Activated CD4-positive, alpha-beta memory T cell treated with anti-CD3 and anti-CD28 coated beads for 36 hours (primary cell): ENCODE measurements at regions of chr1 and their contacts with region 1.

Region 1: GRCh38 chr1:24541711-24542346 is 14.1 kb upstream of the NCMAP start:
- DNase-seq: peak; percentile 58
- H3K4me3 Mint-ChIP-seq: no peak overlapping the region
- H3K27ac Mint-ChIP-seq: peak overlapping the region; percentile 93
- H3K4me1 Mint-ChIP-seq: peaks cover 65% of the 10 kb centered on the region
- H3K27me3 Mint-ChIP-seq: no peaks in the 10 kb centered on the region

Region 2: GRCh38 chr1:24186993-24187805 is 354.6 kb before region 1 on chr1 and contains the start of gene IFNLR1:
- CTCF ChIA-PET with region 1: no interaction called
- POLR2A ChIA-PET with region 1: interaction called, 3 read pairs
- intact Hi-C with region 1: loop called (anchors 2 kb)
- DNase-seq: peak; percentile 91
- H3K4me3 Mint-ChIP-seq: peak within 1 kb of the TSS; percentile 80
- H3K27ac Mint-ChIP-seq: peak within 1 kb of the TSS; percentile 54
- H3K4me1 Mint-ChIP-seq: peaks cover 48% of the 10 kb centered on the region
- H3K27me3 Mint-ChIP-seq: peaks cover 2% of the 10 kb centered on the region
- total RNA-seq, gene IFNLR1: 6.2 to 10.0 TPM

Region 3: DNA sequence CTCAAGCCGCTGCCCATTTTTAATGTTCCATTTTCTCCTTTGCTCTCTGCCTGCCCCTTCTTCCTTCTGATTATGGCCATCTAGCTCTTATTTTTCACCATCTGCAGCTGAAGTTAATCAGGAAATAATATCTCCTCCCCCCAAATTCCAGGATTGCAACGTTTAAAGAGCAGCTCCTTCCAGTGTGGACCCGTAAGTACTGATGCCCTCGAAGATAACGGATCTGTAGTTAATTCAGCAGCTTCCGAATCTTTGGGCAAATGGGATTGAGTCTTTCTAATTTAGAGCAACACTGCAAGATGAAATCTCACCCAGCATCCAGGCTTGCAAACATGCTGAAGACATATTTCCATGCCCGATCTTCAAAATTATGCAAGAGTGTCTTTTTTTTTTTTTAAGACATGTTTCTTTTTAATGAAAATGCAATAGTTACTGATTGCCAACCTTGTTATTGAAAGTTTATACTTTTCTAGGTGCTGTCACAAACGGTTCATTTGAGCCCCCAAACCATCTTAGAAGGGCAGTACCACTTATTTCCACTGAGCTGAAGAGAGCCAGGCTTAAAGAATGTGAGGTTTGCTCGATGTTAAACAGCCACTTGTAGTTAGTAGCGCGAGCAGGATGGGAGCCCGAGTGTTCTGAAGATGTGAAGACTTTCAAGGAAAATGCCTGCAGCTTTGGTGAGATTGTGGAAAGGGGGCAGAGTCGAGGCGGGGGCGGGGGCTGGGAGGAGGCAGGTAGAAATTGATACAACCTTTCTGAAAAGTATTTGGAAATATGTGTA is 50.1 kb before region 1 on chr1:
- CTCF ChIA-PET with region 1: interaction called, 7 read pairs
- POLR2A ChIA-PET with region 1: interaction called, 3 read pairs
- intact Hi-C with region 1: loop called (anchors 1 kb)
- DNase-seq: no peak
- H3K4me3 Mint-ChIP-seq: no peak overlapping the region
- H3K27ac Mint-ChIP-seq: no peak overlapping the region
- H3K4me1 Mint-ChIP-seq: peaks cover 30% of the 10 kb centered on the region
- H3K27me3 Mint-ChIP-seq: no peaks in the 10 kb centered on the region

Region 4: DNA sequence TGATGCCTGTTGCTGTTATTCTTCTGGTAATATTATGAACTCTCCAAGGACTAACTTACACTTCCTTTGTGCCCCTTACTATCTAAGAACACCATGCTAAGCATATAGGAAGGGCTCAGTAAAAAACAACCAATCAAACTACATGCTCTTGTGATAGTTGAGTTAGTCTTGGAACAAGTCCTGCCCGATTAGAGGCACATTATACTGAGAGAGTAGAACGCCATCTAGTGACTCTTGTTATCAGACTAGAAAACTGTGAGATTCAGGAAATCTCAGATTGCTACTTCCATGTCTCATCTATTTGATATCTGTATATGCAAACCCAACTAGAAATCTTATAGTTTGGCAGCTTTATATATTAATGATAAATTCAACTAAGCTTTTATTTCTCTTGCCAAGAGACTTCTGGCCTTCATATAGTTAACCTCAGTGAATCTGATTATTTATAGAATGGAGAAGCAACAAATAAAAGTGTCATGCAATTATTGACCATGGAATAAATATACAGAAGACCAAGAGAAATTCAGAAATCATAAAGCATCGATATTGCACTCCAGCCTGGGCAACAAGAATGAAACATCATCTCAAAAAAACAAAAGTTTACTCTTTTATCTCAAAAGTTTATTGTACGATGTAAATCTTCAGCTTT is 93.5 kb after region 1 on chr1:
- CTCF ChIA-PET with region 1: interaction called, 11 read pairs
- POLR2A ChIA-PET with region 1: no interaction called
- intact Hi-C with region 1: loop called (anchors 1 kb)
- DNase-seq: no peak
- H3K4me3 Mint-ChIP-seq: no peak overlapping the region
- H3K27ac Mint-ChIP-seq: peak overlapping the region; percentile 25
- H3K4me1 Mint-ChIP-seq: peaks cover 14% of the 10 kb centered on the region
- H3K27me3 Mint-ChIP-seq: peaks cover 2% of the 10 kb centered on the region

Region 5: GRCh38 chr1:24688621-24689195 is 146.9 kb after region 1 on chr1:
- CTCF ChIA-PET with region 1: no interaction called
- POLR2A ChIA-PET with region 1: no interaction called
- intact Hi-C with region 1: no loop called
- DNase-seq: peak; percentile 71
- H3K4me3 Mint-ChIP-seq: no peak overlapping the region
- H3K27ac Mint-ChIP-seq: no peak overlapping the region
- H3K4me1 Mint-ChIP-seq: no peaks in the 10 kb centered on the region
- H3K27me3 Mint-ChIP-seq: no peaks in the 10 kb centered on the region

Region 6: DNA sequence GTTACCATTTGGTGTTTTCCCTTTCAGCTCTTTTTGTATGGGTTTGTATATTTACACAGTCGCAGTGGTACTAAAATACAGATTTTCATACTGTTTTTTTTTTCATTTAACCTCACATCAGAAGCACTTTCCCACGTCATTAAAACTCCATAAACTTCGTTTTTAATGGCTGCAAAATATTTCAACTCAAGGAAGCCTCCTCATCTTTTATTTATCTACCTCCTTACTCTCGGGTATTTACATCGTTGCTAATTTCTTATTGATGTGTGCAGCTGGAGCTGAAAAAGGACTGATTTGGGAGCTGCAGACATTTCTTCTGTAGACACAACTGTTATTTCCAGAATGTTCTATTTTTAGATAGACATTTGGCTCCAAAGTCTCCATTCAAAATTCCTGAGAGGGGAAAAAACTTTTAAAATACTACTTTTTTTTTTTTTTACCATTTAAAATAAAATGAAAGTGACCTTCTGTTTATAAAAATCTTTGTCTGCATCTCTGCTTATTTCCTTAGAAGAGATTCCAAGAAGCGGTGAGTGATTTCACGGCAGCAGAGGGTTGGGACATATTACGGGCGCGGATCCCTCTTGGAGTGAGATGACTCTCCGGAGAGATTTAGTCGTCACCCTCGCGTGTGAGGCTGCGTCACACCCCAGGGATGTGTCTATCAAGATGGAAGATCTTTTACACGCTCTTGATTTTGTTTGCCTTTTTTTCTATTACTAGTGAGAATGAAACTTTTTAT is 378.1 kb after region 1 on chr1:
- CTCF ChIA-PET with region 1: no interaction called
- POLR2A ChIA-PET with region 1: no interaction called
- intact Hi-C with region 1: loop called (anchors 2 kb)
- DNase-seq: peak; percentile 93
- H3K4me3 Mint-ChIP-seq: peak overlapping the region; percentile 50
- H3K27ac Mint-ChIP-seq: peak overlapping the region; percentile 98
- H3K4me1 Mint-ChIP-seq: peaks cover 89% of the 10 kb centered on the region
- H3K27me3 Mint-ChIP-seq: no peaks in the 10 kb centered on the region